ENCODE measurements at regions of chr5 and their contacts with region 1.

Region 1: GRCh38 chr5:37774912-37775483 is 64.8 kb downstream of the GDNF start:
- DNase-seq: no peak
- H3K4me3 ChIP-seq: no peak overlapping the region
- CTCF ChIP-seq: peak; percentile 50

Region 2: GRCh38 chr5:37738057-37738691 is 36.8 kb before region 1 on chr5:
- CTCF ChIA-PET with region 1: interaction called, 12 read pairs
- POLR2A ChIA-PET with region 1: interaction called, 21 read pairs
- DNase-seq: peak; percentile 85
- H3K4me3 ChIP-seq: no peak overlapping the region
- CTCF ChIP-seq: no peak

Region 3: DNA sequence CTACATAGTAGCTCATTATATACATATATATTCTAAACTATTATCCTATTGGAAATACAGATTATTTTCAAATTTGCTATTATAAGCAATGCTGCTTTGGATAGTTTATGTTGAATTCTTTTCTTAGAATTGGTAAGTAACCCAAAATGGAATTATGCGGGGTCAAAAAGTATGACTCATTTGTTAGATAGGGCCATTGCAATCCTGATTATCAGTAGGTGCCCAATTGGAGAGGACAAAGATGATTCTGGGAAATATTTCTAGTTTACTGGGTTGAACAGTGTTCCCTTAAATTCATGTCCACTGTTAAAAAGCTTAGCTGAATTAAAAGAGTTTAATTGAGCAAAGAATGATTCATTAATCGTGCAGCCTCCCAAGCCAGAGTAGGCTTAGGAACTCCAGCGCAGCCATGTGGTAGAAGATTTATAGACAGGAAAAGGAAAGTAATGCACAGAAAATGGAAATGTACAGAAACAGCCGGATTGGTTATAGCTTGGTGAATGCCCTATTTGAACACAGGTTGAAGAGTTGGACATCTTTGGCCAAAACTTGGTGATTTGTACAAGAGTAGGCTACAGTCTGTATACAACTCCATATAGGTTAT is 16.9 kb before region 1 on chr5:
- CTCF ChIA-PET with region 1: interaction called, 12 read pairs
- POLR2A ChIA-PET with region 1: interaction called, 5 read pairs
- DNase-seq: no peak
- H3K4me3 ChIP-seq: no peak overlapping the region
- CTCF ChIP-seq: no peak

Region 4: GRCh38 chr5:37810311-37810710 is 35.3 kb after region 1 on chr5:
- CTCF ChIA-PET with region 1: interaction called, 4 read pairs
- POLR2A ChIA-PET with region 1: interaction called, 12 read pairs
- DNase-seq: no peak
- H3K4me3 ChIP-seq: peak overlapping the region; percentile 50
- CTCF ChIP-seq: no peak

Region 5: DNA sequence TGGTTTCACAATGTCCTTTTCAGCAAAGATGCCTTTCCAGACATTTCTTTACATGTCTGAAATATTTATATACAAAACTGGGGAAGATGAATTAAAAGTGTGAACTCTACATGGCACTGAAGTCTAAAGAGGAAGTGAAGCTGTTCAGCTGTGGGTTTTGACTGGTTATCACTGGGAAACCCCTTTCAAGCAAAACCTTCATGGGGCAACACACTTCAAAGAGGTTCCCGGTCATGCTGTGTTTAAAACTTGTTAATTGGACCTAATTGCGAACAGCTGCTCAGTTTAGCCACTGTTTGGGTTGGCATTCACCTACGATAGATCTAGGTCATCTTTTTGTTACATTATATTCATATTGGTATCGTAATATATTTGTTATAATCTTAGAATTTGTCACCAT is 84.8 kb after region 1 on chr5:
- CTCF ChIA-PET with region 1: no interaction called
- POLR2A ChIA-PET with region 1: no interaction called
- DNase-seq: no peak
- H3K4me3 ChIP-seq: no peak overlapping the region
- CTCF ChIP-seq: no peak